ENCODE measurements at regions of chr4 and their contacts with region 1.

Region 1: GRCh38 chr4:168694648-168695047 is 197.8 kb downstream of the PALLD start:
- DNase-seq: no peak
- ATAC-seq: no peak
- H3K4me3 ChIP-seq: no peak overlapping the region
- H3K27ac ChIP-seq: no peak overlapping the region
- H3K4me1 ChIP-seq: no peaks in the 10 kb centered on the region
- H3K27me3 ChIP-seq: no peaks in the 10 kb centered on the region

Region 2: DNA sequence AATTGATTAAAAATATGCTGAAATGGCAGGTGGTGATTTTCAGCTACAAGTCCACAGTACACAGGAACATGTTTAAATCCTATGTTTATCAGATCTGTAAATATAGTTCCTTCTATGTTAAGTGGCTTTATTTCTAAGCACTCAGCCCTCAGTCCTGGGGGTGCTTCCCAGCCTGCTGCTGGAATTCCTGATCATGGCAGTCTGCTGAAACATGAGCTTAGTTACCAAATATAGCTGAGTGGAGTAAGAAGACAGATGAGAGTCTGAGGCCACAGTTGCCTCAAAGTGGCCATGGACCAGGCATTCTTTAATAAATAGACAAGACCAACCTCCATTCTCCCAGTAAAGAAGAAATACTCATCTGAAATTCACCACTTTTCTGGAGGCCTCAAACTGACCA is 359.0 kb before region 1 on chr4:
- intact Hi-C with region 1: no loop called
- DNase-seq: no peak
- ATAC-seq: no peak
- H3K4me3 ChIP-seq: no peak overlapping the region
- H3K27ac ChIP-seq: no peak overlapping the region
- H3K4me1 ChIP-seq: no peaks in the 10 kb centered on the region
- H3K27me3 ChIP-seq: no peaks in the 10 kb centered on the region

Region 3: GRCh38 chr4:168631241-168632162 is 63.1 kb before region 1 on chr4:
- intact Hi-C with region 1: loop called in 1 of 2 experiments (anchors 10 kb)
- DNase-seq: peak; percentile 76 to 90
- ATAC-seq: peak; percentile 89
- H3K4me3 ChIP-seq: peak overlapping the region; percentile 69 to 99
- H3K27ac ChIP-seq: peak overlapping the region; percentile 46 to 79
- H3K4me1 ChIP-seq: peaks cover 1 to 7% of the 10 kb centered on the region in 2 donors
- H3K27me3 ChIP-seq: no peaks in the 10 kb centered on the region

Measured in aorta (tissue), 5 donors.